ENCODE measurements at regions of chr9 and their contacts with region 1.

Region 1: GRCh38 chr9:38284588-38285051 is 107.9 kb upstream of the ALDH1B1 start:
- DNase-seq: no peak
- ATAC-seq: no peak
- H3K4me3 ChIP-seq: no peak overlapping the region
- H3K27ac ChIP-seq: no peak overlapping the region
- H3K4me1 ChIP-seq: no peaks in the 10 kb centered on the region
- H3K27me3 ChIP-seq: no peaks in the 10 kb centered on the region
- CTCF ChIP-seq: no peak
- POLR2A ChIP-seq: no peak

Region 2: DNA sequence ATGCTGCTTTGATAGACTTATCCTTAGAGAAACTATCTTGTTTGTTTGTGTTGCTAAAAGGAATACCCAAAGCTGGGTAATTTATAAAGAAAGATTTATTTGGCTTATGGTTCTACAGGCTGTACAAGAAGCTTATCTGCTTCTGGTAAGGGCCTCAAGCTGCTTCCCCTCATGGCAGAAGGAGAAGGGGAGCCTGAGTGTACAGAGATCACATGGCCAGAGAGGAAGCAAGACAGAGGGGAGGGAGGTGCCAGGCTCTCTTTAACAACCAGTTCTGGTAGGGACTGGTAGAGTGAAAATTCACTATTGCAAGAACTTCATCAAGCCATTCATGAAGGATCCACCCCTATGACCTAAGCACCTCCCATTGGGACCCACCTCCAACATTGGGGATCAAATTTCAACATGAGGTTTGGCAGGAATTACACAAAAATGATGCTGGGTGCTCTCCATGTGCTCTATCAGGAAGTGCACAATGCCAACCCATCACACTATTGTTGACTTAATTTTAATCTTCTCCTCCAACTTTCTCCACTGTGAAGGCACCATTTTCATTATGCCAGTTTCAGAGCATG is 100.5 kb before region 1 on chr9:
- in situ Hi-C with region 1: no loop called
- intact Hi-C with region 1: no loop called
- DNase-seq: no peak
- ATAC-seq: no peak
- H3K4me3 ChIP-seq: no peak overlapping the region
- H3K27ac ChIP-seq: no peak overlapping the region
- H3K4me1 ChIP-seq: no peaks in the 10 kb centered on the region
- H3K27me3 ChIP-seq: no peaks in the 10 kb centered on the region
- CTCF ChIP-seq: no peak
- POLR2A ChIP-seq: no peak

Region 3: DNA sequence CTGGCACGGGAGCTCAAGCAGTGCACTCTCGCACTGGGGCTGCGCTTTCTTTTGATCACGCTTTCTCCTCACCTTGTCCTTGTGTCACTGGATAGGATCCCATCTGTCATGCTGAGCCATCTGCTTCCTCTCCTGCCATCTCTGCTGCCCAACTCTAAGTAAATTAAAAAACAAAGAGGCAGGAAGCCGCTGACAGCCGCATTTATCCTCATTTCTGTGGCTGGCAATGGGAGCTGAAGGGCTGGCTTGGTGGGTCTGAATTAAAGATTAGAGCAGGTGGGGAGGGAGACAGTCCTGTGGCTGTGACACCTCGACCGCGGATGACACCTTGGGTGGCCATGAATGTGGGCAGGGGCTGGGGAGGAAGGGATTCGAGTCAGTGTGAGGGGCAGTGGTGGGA is 51.3 kb before region 1 on chr9:
- in situ Hi-C with region 1: loop called in 1 of 4 experiments (anchors 10 kb)
- intact Hi-C with region 1: no loop called
- DNase-seq: no peak
- ATAC-seq: no peak
- H3K4me3 ChIP-seq: no peak overlapping the region
- H3K27ac ChIP-seq: no peak overlapping the region
- H3K4me1 ChIP-seq: no peaks in the 10 kb centered on the region
- H3K27me3 ChIP-seq: peaks cover 0 to 2% (median 0%) of the 10 kb centered on the region in 3 donors
- CTCF ChIP-seq: no peak
- POLR2A ChIP-seq: no peak

Region 4: GRCh38 chr9:38311382-38312270 is 27.0 kb after region 1 on chr9:
- in situ Hi-C with region 1: no loop called
- intact Hi-C with region 1: no loop called
- DNase-seq: no peak
- ATAC-seq: no peak
- H3K4me3 ChIP-seq: no peak overlapping the region
- H3K27ac ChIP-seq: no peak overlapping the region
- H3K4me1 ChIP-seq: no peaks in the 10 kb centered on the region
- H3K27me3 ChIP-seq: peaks cover 0 to 15% (median 0%) of the 10 kb centered on the region in 3 donors
- CTCF ChIP-seq: no peak
- POLR2A ChIP-seq: no peak

Measured in gastrocnemius medialis (tissue), 4 donors.